ENCODE measurements at regions of chr4 and their contacts with region 1.

Region 1: DNA sequence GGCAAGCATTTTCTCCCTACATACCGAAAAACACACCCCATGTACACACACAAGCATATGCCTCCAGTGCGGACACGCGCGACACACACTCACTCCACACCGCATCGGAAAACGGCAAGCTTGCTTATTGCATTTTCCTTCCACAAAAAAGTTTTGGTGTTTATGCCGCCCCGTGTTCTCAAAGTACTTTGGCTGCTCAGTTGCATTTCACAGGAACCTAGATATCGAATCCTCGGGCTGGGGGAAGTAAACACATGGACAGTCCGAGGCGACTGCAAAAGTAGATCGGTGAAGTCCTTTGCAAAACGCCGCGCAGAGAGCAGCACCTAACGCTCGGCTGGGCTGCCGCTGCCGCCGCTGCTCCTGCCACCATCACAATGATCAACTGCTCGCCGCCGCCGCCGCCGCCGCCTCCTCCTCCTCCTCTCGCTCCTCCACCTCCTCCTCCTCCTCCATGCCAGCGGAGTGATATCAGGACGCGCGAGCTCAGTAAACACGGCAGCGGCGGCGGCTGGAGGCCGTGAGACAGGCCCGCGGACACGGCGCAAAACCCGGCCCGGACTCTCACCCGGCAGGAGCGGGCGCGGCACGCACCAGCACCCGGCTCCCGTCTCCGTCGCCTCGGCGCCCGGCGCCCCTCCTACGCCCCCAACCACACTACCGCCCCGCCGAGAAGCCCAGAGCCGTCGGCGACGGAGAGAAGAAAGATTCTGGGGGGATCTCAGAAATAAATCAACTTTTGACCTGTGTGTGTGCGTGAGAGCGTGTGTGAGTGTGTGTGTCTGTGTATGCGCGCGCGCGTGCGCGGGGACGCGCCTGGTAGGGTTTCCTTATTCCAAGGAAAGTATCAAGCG is at the start of gene MAML3:
- DNase-seq: peak; percentile 76

Region 2: GRCh38 chr4:140049024-140049848 is 104.7 kb before region 1 on chr4:
- CTCF ChIA-PET with region 1: no interaction called
- POLR2A ChIA-PET with region 1: interaction called, 13 read pairs
- DNase-seq: peak; percentile 28

Region 3: DNA sequence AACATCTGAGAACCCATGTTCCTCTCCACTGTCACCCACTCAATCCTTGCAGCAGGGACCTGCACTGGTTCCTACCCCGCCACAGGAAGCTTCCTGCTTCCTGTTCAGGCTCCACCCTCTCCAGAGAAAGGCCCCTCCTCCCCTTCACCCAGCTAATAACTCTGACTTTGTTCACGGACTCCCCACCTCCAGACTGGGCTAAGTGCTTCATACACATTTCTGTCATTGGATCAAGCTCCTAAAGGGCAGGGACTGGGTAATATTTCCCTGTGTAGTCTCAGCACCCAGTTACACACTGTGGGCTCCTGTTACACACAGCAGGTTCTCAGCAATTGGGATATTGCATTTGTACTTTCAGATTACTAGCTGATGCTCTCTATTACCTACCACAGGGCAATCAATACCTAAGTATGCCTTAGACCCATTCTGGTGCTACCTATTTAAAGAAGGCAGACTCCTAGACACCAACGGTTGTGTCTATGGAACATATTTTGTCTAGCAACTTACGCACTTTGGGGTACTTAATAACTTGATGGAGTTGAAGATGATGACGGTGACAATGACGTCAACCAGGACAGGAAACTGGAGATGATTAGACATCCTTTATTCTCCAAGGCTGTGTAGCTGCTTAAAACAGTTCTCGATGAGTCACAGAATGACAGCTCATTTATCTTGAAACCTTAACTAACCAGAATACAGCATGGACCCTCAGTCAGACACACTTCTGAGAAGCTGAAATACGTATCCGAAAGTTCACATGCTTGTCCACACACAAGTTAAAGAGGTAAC is 58.1 kb before region 1 on chr4:
- CTCF ChIA-PET with region 1: no interaction called
- POLR2A ChIA-PET with region 1: interaction called, 14 read pairs
- DNase-seq: no peak

Region 4: GRCh38 chr4:140174543-140174942 is 20.6 kb after region 1 on chr4:
- CTCF ChIA-PET with region 1: no interaction called
- POLR2A ChIA-PET with region 1: no interaction called
- DNase-seq: no peak

Region 5: DNA sequence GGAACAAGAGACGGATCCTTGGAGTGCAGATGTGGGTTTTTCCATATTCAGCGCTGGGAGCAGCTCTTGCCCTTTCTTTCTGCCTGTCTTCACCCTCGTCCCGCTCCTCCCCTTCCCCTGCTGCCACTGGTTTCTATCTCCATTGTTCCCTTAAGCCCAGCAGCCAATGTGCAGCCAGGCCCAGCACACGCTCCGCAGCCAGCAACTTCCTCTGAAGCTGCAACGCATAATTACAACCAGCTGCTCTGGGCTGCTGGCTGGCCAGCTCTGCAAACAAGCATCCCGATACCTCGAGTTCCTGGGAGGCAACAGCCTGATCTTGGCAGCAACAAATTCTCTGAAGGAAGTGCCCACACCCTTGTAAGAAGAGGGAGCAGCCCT is 83.7 kb after region 1 on chr4:
- CTCF ChIA-PET with region 1: no interaction called
- POLR2A ChIA-PET with region 1: interaction called, 11 read pairs
- DNase-seq: no peak

Region 6: GRCh38 chr4:140252742-140253555 is 99.0 kb after region 1 on chr4:
- CTCF ChIA-PET with region 1: interaction called, 5 read pairs
- POLR2A ChIA-PET with region 1: interaction called, 16 read pairs
- DNase-seq: peak; percentile 91

Measured in HEK293T (cell line).